HEK293 (cell line): ENCODE measurements at regions of chr12 and their contacts with region 1.

Region 1: GRCh38 chr12:7108796-7109571 is at the start of gene C1RL:
- H3K4me3 ChIP-seq: peak within 1 kb of the TSS; percentile 66
- H3K27ac ChIP-seq: peak within 1 kb of the TSS; percentile 21; the same call in 1 of the 2 replicates
- H3K4me1 ChIP-seq: no peaks in the 10 kb centered on the region
- CTCF ChIP-seq: peak; percentile 70; the same call in 1 of the 2 replicates

Region 2: DNA sequence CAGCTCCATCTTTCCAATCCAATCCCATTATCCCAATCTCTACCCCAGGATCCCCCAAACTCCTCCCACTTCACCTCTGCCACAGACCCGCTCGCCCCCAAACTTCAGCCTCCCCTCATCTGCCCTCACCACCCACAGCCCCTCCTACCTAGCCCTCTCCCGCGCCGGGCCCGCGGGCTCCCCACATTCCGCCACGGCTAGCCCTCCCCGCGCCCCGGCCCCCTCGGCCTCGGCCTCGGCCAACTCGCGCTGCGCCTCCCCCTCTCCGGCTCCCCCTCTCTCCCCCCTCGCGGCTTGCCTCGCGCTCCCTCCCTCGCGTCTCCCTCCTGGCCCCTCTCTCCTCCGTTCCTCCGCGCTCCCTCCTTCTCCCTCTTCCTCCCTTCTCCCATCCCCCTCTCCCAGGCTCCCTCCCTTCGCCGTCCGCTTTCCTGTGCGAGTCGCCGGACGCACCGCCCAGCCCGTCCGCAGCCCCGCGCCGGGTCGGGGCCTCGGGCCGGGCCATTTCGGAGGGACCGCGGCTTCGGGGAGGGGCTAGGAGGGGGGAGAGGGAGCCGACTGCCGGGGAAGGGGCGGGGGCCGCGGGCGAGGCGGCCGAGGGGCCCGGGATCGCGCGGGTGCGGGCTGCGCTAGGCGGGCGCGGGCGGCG is 181.5 kb before region 1 on chr12 and contains the start of gene ATN1:
- CTCF ChIA-PET with region 1: interaction called, 22 read pairs
- POLR2A ChIA-PET with region 1: interaction called, 3 read pairs
- H3K4me3 ChIP-seq: peak within 1 kb of the TSS; percentile 74
- H3K27ac ChIP-seq: peak within 1 kb of the TSS; percentile 80
- H3K4me1 ChIP-seq: peaks cover 28% of the 10 kb centered on the region
- CTCF ChIP-seq: 0 out of 2 replicates have a peak, but pooled peaks have one; percentile 38

Region 3: GRCh38 chr12:7092229-7092985 is 16.6 kb before region 1 on chr12 and contains the start of gene C1R:
- CTCF ChIA-PET with region 1: interaction called, 18 read pairs
- POLR2A ChIA-PET with region 1: interaction called, 3 read pairs
- H3K4me3 ChIP-seq: peak within 1 kb of the TSS; percentile 38
- H3K27ac ChIP-seq: no peak within 1 kb of the TSS
- H3K4me1 ChIP-seq: no peaks in the 10 kb centered on the region
- CTCF ChIP-seq: peak; percentile 74

Region 4: DNA sequence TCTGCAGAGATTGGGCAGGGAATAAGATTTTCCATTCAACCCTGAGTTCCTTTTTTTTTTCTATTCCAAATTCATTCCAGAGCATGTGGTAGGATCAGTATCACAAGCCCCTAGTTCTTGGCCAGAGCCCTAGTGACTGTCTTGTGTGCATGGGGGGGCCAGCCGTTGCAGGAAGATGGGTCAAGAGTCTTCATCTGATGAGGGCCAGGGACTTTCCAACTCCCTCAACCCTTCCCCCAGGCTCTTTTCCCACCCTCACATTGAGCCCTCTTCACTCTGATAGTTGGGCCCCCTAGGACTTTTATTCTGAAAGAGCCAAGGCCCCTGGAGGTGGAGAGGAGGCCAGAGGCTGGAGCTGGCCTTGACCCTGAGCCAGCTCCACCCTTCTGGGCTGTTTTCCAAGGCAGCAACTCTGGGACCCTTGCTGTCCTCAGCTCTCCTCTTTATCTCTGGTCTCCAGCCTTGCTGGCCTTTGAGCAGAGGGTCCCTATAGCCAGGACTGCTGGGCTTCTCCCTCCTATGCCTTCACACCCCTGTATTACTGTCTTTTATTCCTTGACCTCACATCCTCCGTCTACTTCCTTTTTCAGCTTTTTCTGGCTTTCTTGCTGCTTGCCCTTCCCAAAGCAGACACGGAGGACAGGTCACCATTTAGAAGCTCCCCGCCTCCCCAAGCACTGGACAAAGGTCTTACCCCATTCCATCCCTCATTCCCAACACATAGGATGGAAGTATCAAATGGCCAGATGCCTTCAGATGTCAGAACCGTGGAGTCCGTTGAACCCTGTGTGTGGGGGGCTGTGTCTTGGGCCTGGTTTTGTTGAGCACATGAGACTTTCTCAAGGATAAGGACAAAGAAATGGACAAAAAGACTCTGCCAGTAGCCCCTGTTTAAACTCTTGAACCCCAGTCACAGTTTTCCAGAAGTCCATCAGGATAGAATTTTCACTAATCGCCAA is 14.1 kb after region 1 on chr12:
- CTCF ChIA-PET with region 1: interaction called, 46 read pairs
- POLR2A ChIA-PET with region 1: no interaction called
- H3K4me3 ChIP-seq: no peak overlapping the region
- H3K27ac ChIP-seq: no peak overlapping the region
- H3K4me1 ChIP-seq: no peaks in the 10 kb centered on the region
- CTCF ChIP-seq: no peak

Region 5: DNA sequence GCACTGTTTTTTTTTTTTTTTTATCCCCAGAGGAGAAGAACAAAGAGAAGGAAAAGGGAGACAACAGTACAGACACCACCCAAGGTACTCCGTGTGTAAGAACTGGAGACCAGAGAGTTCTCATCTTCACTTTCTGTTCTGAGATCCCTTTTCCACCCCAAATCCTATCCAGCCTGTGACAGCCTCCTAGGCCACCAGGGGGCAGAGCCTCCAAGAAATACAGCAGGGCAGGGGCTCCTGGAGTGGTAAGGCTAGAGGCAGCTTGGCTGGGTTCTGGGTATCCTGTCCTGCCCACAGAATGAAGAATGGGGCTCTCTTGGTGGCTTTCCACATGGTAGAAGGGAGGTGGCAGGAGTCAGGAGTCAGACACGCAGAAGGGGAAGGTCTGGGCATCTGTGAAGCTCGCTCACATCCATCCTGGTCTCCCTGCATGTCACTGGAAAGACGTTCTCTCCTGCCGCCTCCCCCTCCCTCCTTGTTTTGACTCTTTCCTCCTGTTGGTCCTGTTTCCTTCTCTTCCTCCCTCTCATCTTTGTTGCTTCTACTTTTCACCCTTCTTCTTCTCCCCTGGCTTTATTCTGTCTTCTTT is 33.2 kb after region 1 on chr12:
- CTCF ChIA-PET with region 1: interaction called, 24 read pairs
- POLR2A ChIA-PET with region 1: no interaction called
- H3K4me3 ChIP-seq: no peak overlapping the region
- H3K27ac ChIP-seq: no peak overlapping the region
- H3K4me1 ChIP-seq: no peaks in the 10 kb centered on the region
- CTCF ChIP-seq: no peak; the same call in 1 of the 2 replicates

Region 6: GRCh38 chr12:7162691-7163114 is 53.7 kb after region 1 on chr12:
- CTCF ChIA-PET with region 1: interaction called, 14 read pairs
- POLR2A ChIA-PET with region 1: no interaction called
- H3K4me3 ChIP-seq: no peak overlapping the region
- H3K27ac ChIP-seq: no peak overlapping the region
- H3K4me1 ChIP-seq: no peaks in the 10 kb centered on the region
- CTCF ChIP-seq: peak; percentile 46; the same call in 1 of the 2 replicates